ENCODE measurements at regions of chr6 and their contacts with region 1.

Region 1: GRCh38 chr6:70547313-70547712 is 19.4 kb upstream of the SDHAF4 start:
- DNase-seq: no peak
- H3K4me3 ChIP-seq: no peak overlapping the region
- H3K27ac ChIP-seq: no peak overlapping the region
- H3K4me1 ChIP-seq: peaks cover 0 to 5% (median 0%) of the 10 kb centered on the region in 4 experiments; a peak in 1 of 7 replicates
- H3K27me3 ChIP-seq: no peaks in the 10 kb centered on the region
- CTCF ChIP-seq: peak in 2 of 3 experiments; percentile 59 to 60; a peak in 3 of 4 replicates
- EP300 ChIP-seq: no peak
- POLR2A ChIP-seq: no peak
- RAD21 ChIP-seq: peak; percentile 73 to 80

Region 2: GRCh38 chr6:70599187-70599586 is 51.9 kb after region 1 on chr6:
- CTCF ChIA-PET with region 1: interaction called, 10 read pairs
- POLR2A ChIA-PET with region 1: no interaction called
- DNase-seq: no peak
- H3K4me3 ChIP-seq: no peak overlapping the region
- H3K27ac ChIP-seq: no peak overlapping the region
- H3K4me1 ChIP-seq: peaks cover 2 to 15% (median 7%) of the 10 kb centered on the region in 4 experiments; a peak in 4 of 7 replicates
- H3K27me3 ChIP-seq: no peaks in the 10 kb centered on the region
- CTCF ChIP-seq: no peak
- EP300 ChIP-seq: no peak
- POLR2A ChIP-seq: no peak
- RAD21 ChIP-seq: no peak